ENCODE measurements at regions of chr15 and their contacts with region 1.

Region 1: GRCh38 chr15:52780172-52780980 is 9.8 kb downstream of the ONECUT1 start:
- DNase-seq: peak; percentile 22
- H3K4me3 ChIP-seq: no peak overlapping the region
- CTCF ChIP-seq: peak; percentile 87

Region 2: GRCh38 chr15:52445553-52445952 is 334.8 kb before region 1 on chr15:
- in situ Hi-C with region 1: no loop called
- DNase-seq: no peak
- H3K4me3 ChIP-seq: no peak overlapping the region
- CTCF ChIP-seq: no peak

Region 3: DNA sequence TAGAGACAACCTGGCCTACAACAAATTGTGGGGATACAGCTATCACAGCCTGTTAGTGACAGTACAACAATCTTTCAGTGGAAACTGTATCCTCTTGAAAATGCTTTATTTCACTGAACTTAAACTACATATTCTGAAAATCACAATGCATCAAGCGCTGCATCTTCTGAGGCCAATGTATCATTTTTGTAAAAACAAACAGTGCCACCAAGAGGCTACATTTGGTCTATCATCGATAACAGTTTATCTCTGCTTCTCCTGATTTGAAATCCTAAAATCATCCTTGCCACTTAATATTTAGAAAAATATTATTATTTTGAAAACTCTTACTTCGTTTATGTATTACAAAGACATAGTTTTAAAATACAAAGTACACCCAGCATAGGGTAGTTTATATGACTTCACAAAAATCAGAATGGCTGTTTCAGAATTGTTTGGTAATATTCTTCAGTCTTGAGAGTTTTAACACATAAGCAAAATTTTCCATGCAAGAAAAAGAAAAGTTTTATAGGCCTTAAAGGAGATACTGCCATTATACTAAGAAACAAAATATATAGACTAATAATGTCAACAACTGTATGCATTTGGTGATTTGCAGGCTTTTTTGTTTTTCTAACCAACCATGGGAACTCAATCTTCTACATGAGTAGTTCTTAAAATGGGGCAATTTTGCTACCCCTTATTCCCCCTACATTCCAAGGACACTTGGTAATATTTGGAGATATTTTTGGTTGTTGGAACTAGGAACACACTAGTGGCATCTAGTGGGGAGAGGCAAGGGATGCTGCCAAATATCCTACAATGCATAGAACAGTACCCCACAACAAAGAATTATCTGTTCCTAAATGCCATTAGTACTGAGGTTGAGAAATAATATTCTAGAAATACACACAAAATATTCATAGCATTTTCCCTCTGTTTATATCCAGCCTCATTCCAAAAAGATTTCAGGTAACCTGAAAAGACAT is 936.8 kb after region 1 on chr15:
- in situ Hi-C with region 1: loop called (anchors 25 kb)
- DNase-seq: peak; percentile 2
- H3K4me3 ChIP-seq: no peak overlapping the region
- CTCF ChIP-seq: peak; percentile 35

Measured in astrocyte of the cerebellum (primary cell).